Prostate gland (tissue), 2 donors: ENCODE measurements at regions of chr9 and their contacts with region 1.

Region 1: GRCh38 chr9:33225319-33226149 is 14.4 kb upstream of the SPINK4 start:
- DNase-seq: peak; percentile 78
- H3K4me3 ChIP-seq: no peak overlapping the region
- H3K27ac ChIP-seq: no peak overlapping the region
- H3K4me1 ChIP-seq: no peaks in the 10 kb centered on the region
- H3K27me3 ChIP-seq: no peaks in the 10 kb centered on the region
- CTCF ChIP-seq: peak; percentile 59 to 97 (median 94)
- POLR2A ChIP-seq: no peak

Region 2: GRCh38 chr9:33081128-33081851 is 144.2 kb before region 1 on chr9:
- intact Hi-C with region 1: loop called (anchors 1 kb)
- DNase-seq: peak; percentile 79
- H3K4me3 ChIP-seq: no peak overlapping the region
- H3K27ac ChIP-seq: peak overlapping the region; percentile 59 to 73
- H3K4me1 ChIP-seq: no peaks in the 10 kb centered on the region
- H3K27me3 ChIP-seq: no peaks in the 10 kb centered on the region
- CTCF ChIP-seq: peak; percentile 40 to 93 (median 84)
- POLR2A ChIP-seq: no peak

Region 3: GRCh38 chr9:33125871-33126822 is 99.4 kb before region 1 on chr9:
- intact Hi-C with region 1: loop called (anchors 2 kb)
- DNase-seq: no peak
- H3K4me3 ChIP-seq: no peak overlapping the region
- H3K27ac ChIP-seq: no peak overlapping the region
- H3K4me1 ChIP-seq: peaks cover 8% of the 10 kb centered on the region
- H3K27me3 ChIP-seq: no peaks in the 10 kb centered on the region
- CTCF ChIP-seq: no peak
- POLR2A ChIP-seq: no peak